MCF 10A (cell line): ENCODE measurements at regions of chr1 and their contacts with region 1.

Region 1: GRCh38 chr1:156465747-156466365 is 34.7 kb downstream of the MEF2D start:
- DNase-seq: peak; percentile 57
- H3K4me3 Mint-ChIP-seq: peak overlapping the region; percentile 59
- H3K27ac Mint-ChIP-seq: peak overlapping the region; percentile 82
- H3K4me1 Mint-ChIP-seq: peaks cover 58% of the 10 kb centered on the region
- H3K27me3 Mint-ChIP-seq: no peaks in the 10 kb centered on the region
- CTCF ChIP-seq: peak; percentile 31

Region 2: GRCh38 chr1:156104065-156104810 is 361.6 kb before region 1 on chr1:
- CTCF ChIA-PET with region 1: no interaction called
- POLR2A ChIA-PET with region 1: no interaction called
- intact Hi-C with region 1: no loop called
- DNase-seq: peak; percentile 94
- H3K4me3 Mint-ChIP-seq: peak overlapping the region; percentile 9
- H3K27ac Mint-ChIP-seq: peak overlapping the region; percentile 91
- H3K4me1 Mint-ChIP-seq: peaks cover 73% of the 10 kb centered on the region
- H3K27me3 Mint-ChIP-seq: no peaks in the 10 kb centered on the region
- CTCF ChIP-seq: no peak

Region 3: DNA sequence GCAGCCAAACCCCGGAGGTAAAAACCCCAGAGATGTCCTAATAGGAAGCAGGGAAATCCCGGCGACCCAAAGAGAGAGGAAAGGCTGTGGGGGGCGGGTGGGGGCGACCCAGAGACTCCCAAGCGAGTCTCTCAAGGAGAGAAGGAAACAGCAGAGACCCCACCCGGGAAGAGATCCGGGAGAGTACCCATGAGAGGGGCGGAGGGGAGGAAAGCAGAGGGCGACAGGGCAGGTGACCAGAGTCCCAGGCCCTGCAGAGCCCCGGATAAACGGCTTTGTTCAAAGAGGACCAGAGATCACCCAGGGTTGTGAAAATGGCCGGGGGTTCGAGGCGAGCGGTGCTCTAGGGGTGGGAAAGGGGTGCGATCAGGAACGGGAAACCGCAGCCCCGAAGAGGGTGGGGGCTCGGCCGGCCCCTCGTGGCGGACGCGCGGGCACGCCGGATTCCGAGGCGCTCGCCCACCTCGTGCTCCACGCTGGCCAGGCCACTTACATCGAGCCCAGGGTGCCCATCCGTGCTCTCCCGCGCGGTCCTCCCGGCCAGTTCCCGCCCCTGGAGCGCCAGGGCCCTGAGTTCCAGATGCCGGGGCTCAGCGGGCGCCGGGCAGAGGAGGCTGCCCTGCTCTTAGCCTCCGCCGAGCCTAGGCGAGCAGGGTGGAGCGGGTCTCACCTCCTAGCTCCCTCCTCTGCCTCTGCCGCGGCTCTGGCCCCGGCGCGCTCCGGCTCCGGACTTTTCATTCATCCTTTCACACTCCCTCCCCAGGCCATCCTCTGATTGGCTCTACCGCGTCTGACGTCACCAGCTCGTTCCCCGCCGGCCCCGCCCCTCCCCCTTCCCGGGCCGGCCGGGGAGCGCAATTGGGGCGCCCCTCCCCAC is 44.6 kb before region 1 on chr1:
- CTCF ChIA-PET with region 1: no interaction called
- POLR2A ChIA-PET with region 1: no interaction called
- intact Hi-C with region 1: no loop called
- DNase-seq: peak; percentile 93
- H3K4me3 Mint-ChIP-seq: peak overlapping the region; percentile 71
- H3K27ac Mint-ChIP-seq: no peak overlapping the region
- H3K4me1 Mint-ChIP-seq: peaks cover 5% of the 10 kb centered on the region
- H3K27me3 Mint-ChIP-seq: peaks cover 90% of the 10 kb centered on the region
- CTCF ChIP-seq: no peak

Region 4: GRCh38 chr1:156435545-156436141 is 30.2 kb before region 1 on chr1:
- CTCF ChIA-PET with region 1: no interaction called
- POLR2A ChIA-PET with region 1: no interaction called
- intact Hi-C with region 1: no loop called
- DNase-seq: no peak
- H3K4me3 Mint-ChIP-seq: no peak overlapping the region
- H3K27ac Mint-ChIP-seq: no peak overlapping the region
- H3K4me1 Mint-ChIP-seq: no peaks in the 10 kb centered on the region
- H3K27me3 Mint-ChIP-seq: peaks cover 99% of the 10 kb centered on the region
- CTCF ChIP-seq: no peak

Region 5: DNA sequence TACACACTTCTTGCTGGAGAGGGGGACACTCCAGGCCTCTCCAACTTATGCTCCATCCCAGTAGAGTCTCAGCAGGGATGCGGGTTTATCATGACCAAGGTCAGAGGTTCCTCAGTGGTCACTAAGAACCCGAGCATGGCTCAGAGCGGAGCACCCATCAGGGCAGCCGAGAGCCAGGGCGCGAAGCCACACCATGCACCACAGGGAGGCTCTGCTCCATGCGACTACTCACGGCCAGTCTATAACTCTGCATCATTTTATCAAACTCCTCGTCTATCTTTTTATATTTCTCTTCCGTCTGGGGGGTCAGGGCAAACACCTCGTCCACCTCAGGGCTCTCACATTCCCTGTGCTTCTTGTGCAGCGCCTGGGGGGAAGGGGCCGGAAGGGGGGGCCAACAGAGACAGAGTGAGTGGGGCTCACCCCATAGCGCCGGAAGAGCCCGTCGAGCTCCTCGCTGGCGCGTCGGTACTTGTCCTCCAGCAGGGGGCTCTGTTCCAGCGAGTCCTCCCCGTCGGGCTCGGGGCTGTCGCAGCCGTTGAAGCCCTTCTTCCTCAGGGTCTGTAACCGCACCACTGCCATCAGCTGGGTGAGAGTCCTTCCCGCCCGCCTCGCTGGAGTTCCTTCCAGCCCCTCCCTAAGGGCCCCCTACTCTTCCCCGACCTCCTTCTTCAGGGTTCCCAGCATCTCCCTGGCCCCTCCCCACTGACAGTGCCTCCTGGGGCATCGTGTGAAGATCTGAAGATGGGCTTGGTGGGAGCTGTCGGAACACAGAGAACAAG is 14.7 kb after region 1 on chr1:
- CTCF ChIA-PET with region 1: interaction called, 10 read pairs
- POLR2A ChIA-PET with region 1: interaction called, 10 read pairs
- intact Hi-C with region 1: no loop called
- DNase-seq: peak; percentile 33
- H3K4me3 Mint-ChIP-seq: no peak overlapping the region
- H3K27ac Mint-ChIP-seq: peak overlapping the region; percentile 82
- H3K4me1 Mint-ChIP-seq: peaks cover 31% of the 10 kb centered on the region
- H3K27me3 Mint-ChIP-seq: no peaks in the 10 kb centered on the region
- CTCF ChIP-seq: peak; percentile 53

Region 6: DNA sequence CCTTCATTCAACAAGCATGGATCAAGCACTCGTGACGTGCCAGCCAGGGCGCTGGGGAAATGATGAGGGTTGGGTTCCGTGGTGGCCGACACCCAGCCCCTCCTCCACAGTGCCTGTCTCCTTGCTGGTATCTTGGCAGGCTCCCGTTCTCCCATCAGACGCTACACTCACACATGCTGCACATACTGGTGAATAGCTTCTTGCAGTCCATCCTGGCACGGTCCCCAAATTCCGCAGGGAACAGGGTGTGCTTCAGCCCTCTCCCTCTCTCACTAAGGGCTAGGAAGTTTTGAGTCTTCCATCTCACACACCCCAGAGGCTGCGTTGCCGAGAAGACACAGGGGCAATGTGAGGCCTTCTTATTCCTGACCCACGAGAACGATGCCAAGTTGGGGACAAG is 44.9 kb after region 1 on chr1:
- CTCF ChIA-PET with region 1: interaction called, 79 read pairs
- POLR2A ChIA-PET with region 1: interaction called, 549 read pairs
- intact Hi-C with region 1: no loop called
- DNase-seq: peak; percentile 98
- H3K4me3 Mint-ChIP-seq: peak overlapping the region; percentile 42
- H3K27ac Mint-ChIP-seq: peak overlapping the region; percentile 77
- H3K4me1 Mint-ChIP-seq: peaks cover 49% of the 10 kb centered on the region
- H3K27me3 Mint-ChIP-seq: no peaks in the 10 kb centered on the region
- CTCF ChIP-seq: no peak

Region 7: GRCh38 chr1:156591432-156592157 is 125.7 kb after region 1 on chr1 and contains the start of gene NAXE:
- CTCF ChIA-PET with region 1: interaction called, 7 read pairs
- POLR2A ChIA-PET with region 1: interaction called, 16 read pairs
- intact Hi-C with region 1: no loop called
- DNase-seq: peak; percentile 77
- H3K4me3 Mint-ChIP-seq: peak within 1 kb of the TSS; percentile 77
- H3K27ac Mint-ChIP-seq: peak within 1 kb of the TSS; percentile 65
- H3K4me1 Mint-ChIP-seq: peaks cover 13% of the 10 kb centered on the region
- H3K27me3 Mint-ChIP-seq: no peaks in the 10 kb centered on the region
- CTCF ChIP-seq: no peak
- total RNA-seq, gene NAXE: 141 and 155 TPM in 2 replicates

Region 8: GRCh38 chr1:156601122-156601830 is 135.4 kb after region 1 on chr1 and contains the start of gene GPATCH4:
- CTCF ChIA-PET with region 1: interaction called, 6 read pairs
- POLR2A ChIA-PET with region 1: interaction called, 14 read pairs
- intact Hi-C with region 1: no loop called
- DNase-seq: peak; percentile 94
- H3K4me3 Mint-ChIP-seq: peak within 1 kb of the TSS; percentile 86
- H3K27ac Mint-ChIP-seq: peak within 1 kb of the TSS; percentile 94
- H3K4me1 Mint-ChIP-seq: peaks cover 18% of the 10 kb centered on the region
- H3K27me3 Mint-ChIP-seq: no peaks in the 10 kb centered on the region
- CTCF ChIP-seq: no peak
- total RNA-seq, gene GPATCH4: 67.3 and 107 TPM in 2 replicates